ENCODE measurements at regions of chr1 and their contacts with region 1.

Region 1: GRCh38 chr1:174999216-174999925 is 376 bp upstream of the CACYBP start:
- DNase-seq: peak; percentile 96
- H3K4me3 Mint-ChIP-seq: no peak overlapping the region
- H3K27ac Mint-ChIP-seq: no peak overlapping the region
- H3K4me1 Mint-ChIP-seq: peaks cover 29% of the 10 kb centered on the region
- H3K27me3 Mint-ChIP-seq: no peaks in the 10 kb centered on the region

Region 2: GRCh38 chr1:173420330-173420806 is 1579.0 kb before region 1 on chr1:
- intact Hi-C with region 1: loop called (anchors 5 kb)
- DNase-seq: peak; percentile 42
- H3K4me3 Mint-ChIP-seq: no peak overlapping the region
- H3K27ac Mint-ChIP-seq: no peak overlapping the region
- H3K4me1 Mint-ChIP-seq: peaks cover 13% of the 10 kb centered on the region
- H3K27me3 Mint-ChIP-seq: no peaks in the 10 kb centered on the region

Region 3: GRCh38 chr1:173867753-173868265 is 1131.6 kb before region 1 on chr1 and contains the start of gene GAS5:
- intact Hi-C with region 1: loop called (anchors 1 kb)
- DNase-seq: peak; percentile 99
- H3K4me3 Mint-ChIP-seq: peak within 1 kb of the TSS; percentile 98
- H3K27ac Mint-ChIP-seq: peak within 1 kb of the TSS; percentile 98
- H3K4me1 Mint-ChIP-seq: peaks cover 66% of the 10 kb centered on the region
- H3K27me3 Mint-ChIP-seq: no peaks in the 10 kb centered on the region
- total RNA-seq, gene GAS5: 653 and 688 TPM in 2 replicates

Region 4: GRCh38 chr1:174262349-174263241 is 736.8 kb before region 1 on chr1:
- intact Hi-C with region 1: loop called (anchors 5 kb)
- DNase-seq: no peak
- H3K4me3 Mint-ChIP-seq: no peak overlapping the region
- H3K27ac Mint-ChIP-seq: no peak overlapping the region
- H3K4me1 Mint-ChIP-seq: no peaks in the 10 kb centered on the region
- H3K27me3 Mint-ChIP-seq: no peaks in the 10 kb centered on the region

Region 5: DNA sequence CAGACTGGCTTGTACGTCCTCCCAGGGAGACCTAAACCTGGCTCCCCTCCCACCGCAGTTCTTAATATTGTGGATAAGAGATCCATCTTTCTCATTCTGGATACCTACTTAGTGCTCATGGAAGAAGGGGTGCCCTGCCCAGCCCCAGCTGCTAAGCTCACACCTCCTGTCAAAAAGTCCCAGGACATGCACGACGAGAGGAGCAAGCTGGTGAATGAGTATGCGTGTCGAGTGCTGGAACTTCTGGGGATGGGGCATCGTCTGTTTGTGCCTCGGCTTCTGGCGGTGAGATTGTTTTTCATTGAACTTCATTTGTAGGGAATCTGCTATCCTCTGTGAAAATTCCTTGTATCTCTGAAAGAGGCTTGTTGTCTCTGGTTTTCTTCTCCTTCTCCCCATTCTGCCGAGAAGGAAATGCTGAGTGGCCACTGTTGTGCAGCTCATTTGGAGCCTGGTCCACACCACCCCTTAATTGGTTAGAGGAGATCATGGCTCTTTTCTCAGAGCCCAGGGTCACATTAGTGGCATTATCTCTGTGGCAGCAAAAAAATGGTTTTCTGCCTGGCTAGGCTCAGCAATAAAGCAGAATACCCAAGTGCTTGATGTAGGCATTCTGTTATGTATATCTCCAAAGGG is 199.0 kb before region 1 on chr1:
- intact Hi-C with region 1: loop called (anchors 1 kb)
- DNase-seq: peak; percentile 4
- H3K4me3 Mint-ChIP-seq: no peak overlapping the region
- H3K27ac Mint-ChIP-seq: no peak overlapping the region
- H3K4me1 Mint-ChIP-seq: peaks cover 15% of the 10 kb centered on the region
- H3K27me3 Mint-ChIP-seq: no peaks in the 10 kb centered on the region